ENCODE measurements at regions of chrX and their contacts with region 1.

Region 1: GRCh38 chrX:110317820-110318658 is at the start of gene AMMECR1:
- DNase-seq: peak; percentile 84
- H3K4me3 Mint-ChIP-seq: peak within 1 kb of the TSS; percentile 97
- H3K27ac Mint-ChIP-seq: peak within 1 kb of the TSS; percentile 96
- H3K4me1 Mint-ChIP-seq: peaks cover 15% of the 10 kb centered on the region
- H3K27me3 Mint-ChIP-seq: no peaks in the 10 kb centered on the region
- CTCF ChIP-seq: no peak
- total RNA-seq, gene AMMECR1: 21.8 and 23.5 TPM in 2 replicates

Region 2: DNA sequence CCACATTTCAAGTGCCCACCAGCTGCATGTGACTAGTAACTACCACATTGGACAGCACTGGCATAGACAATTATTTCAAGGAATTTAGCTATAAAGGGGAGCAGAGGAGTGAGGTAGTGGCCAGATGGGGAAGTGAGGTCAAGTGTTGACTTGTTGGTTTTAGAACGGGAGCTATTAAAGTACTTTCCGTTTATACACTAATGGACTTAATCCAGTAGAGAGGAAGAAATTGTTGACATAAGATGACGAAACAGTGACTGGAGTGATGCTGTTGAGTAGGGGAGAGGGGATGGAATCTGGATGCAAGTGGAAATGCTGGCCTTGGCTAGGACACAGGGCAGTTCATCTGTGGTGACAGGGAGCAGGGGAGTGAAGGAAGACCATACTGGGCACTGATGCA is 154.6 kb before region 1 on chrX:
- CTCF ChIA-PET with region 1: interaction called, 4 read pairs
- intact Hi-C with region 1: loop called (anchors 5 kb)
- DNase-seq: no peak
- H3K4me3 Mint-ChIP-seq: no peak overlapping the region
- H3K27ac Mint-ChIP-seq: no peak overlapping the region
- H3K4me1 Mint-ChIP-seq: no peaks in the 10 kb centered on the region
- H3K27me3 Mint-ChIP-seq: no peaks in the 10 kb centered on the region
- CTCF ChIP-seq: no peak

Region 3: DNA sequence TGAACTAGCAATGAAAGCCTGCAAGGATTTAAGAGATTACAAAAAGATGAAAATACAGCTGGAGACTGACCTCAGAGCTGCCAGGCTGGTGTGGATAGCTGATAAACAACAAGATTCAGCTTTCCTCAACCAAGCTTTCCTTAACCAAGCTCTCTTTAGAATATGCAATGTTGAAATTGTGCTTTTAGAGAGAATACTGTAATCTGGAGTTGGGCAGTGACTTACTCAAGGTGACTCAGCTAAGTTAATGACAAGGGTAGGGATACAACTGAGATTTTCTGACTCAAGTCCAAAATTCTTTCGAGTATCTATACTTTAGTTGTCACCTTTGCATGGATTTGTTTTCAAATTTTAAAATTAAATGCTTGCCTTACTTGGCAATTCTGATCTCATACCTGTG is 98.1 kb before region 1 on chrX:
- CTCF ChIA-PET with region 1: no interaction called
- intact Hi-C with region 1: loop called (anchors 5 kb)
- DNase-seq: no peak
- H3K4me3 Mint-ChIP-seq: no peak overlapping the region
- H3K27ac Mint-ChIP-seq: no peak overlapping the region
- H3K4me1 Mint-ChIP-seq: peaks cover 22% of the 10 kb centered on the region
- H3K27me3 Mint-ChIP-seq: no peaks in the 10 kb centered on the region
- CTCF ChIP-seq: no peak

Region 4: GRCh38 chrX:110241816-110242215 is 76.2 kb before region 1 on chrX:
- CTCF ChIA-PET with region 1: interaction called, 3 read pairs
- intact Hi-C with region 1: loop called (anchors 5 kb)
- DNase-seq: no peak
- H3K4me3 Mint-ChIP-seq: no peak overlapping the region
- H3K27ac Mint-ChIP-seq: no peak overlapping the region
- H3K4me1 Mint-ChIP-seq: peaks cover 64% of the 10 kb centered on the region
- H3K27me3 Mint-ChIP-seq: no peaks in the 10 kb centered on the region
- CTCF ChIP-seq: no peak

Region 5: GRCh38 chrX:110284159-110284558 is 33.9 kb before region 1 on chrX:
- CTCF ChIA-PET with region 1: no interaction called
- intact Hi-C with region 1: loop called (anchors 5 kb)
- DNase-seq: no peak
- H3K4me3 Mint-ChIP-seq: no peak overlapping the region
- H3K27ac Mint-ChIP-seq: peak overlapping the region; percentile 60
- H3K4me1 Mint-ChIP-seq: peaks cover 39% of the 10 kb centered on the region
- H3K27me3 Mint-ChIP-seq: no peaks in the 10 kb centered on the region
- CTCF ChIP-seq: no peak